ENCODE measurements at regions of chr12 and their contacts with region 1.

Region 1: DNA sequence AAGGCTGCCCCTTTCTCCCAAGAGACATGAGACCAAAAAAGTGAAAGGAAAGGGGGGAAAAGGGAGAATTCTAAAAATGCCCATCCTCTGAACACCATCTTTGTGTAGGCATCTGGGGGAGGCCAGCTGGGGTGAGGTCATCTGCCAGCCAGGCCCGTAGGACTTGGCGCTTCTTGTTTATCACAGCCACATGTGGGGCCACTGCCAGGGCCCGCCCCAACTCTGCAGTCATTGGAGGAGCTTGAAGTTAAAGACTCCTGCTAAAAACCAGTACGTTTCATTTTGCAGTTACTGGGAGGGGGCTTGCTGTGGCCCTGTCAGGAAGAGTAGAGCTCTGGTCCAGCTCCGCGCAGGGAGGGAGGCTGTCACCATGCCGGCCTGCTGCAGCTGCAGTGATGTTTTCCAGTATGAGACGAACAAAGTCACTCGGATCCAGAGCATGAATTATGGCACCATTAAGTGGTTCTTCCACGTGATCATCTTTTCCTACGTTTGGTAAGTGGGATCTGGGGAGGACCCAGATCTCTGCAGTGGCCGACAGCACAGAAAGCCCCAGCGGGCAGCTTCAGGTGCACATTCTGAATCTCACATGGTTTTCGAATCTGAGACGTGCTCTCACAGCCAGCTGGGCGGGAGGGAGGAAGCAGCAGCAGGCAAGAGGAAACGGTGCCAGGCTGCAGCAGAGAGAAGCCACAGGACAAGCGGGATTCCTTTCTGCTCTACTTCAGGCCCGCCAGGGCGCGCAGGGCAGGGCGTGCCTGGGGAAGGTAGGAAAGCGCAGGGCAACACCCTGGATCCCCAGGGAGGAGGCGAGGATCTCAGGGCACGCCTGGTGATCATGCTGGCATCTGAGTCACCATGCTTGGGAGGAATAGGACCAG is at the start of gene P2RX7:
- DNase-seq: peak; percentile 95
- ATAC-seq: peak; percentile 99
- H3K4me3 ChIP-seq: peak within 1 kb of the TSS; percentile 65
- H3K27ac ChIP-seq: peak within 1 kb of the TSS; percentile 42
- H3K4me1 ChIP-seq: peaks cover 19% of the 10 kb centered on the region
- H3K27me3 ChIP-seq: no peaks in the 10 kb centered on the region
- CTCF ChIP-seq: peak; percentile 30; the same call in 1 of the 2 replicates
- total RNA-seq, gene P2RX7: 1.6 and 6.0 TPM in 2 replicates

Region 2: GRCh38 chr12:121214855-121215745 is 82.3 kb after region 1 on chr12:
- CTCF ChIA-PET with region 1: no interaction called
- POLR2A ChIA-PET with region 1: no interaction called
- intact Hi-C with region 1: loop called (anchors 2 kb)
- DNase-seq: peak; percentile 96
- ATAC-seq: peak; percentile 74
- H3K4me3 ChIP-seq: peak overlapping the region; percentile 14; the same call in 1 of the 2 replicates
- H3K27ac ChIP-seq: peak overlapping the region; percentile 41
- H3K4me1 ChIP-seq: peaks cover 36% of the 10 kb centered on the region
- H3K27me3 ChIP-seq: no peaks in the 10 kb centered on the region
- CTCF ChIP-seq: no peak

Region 3: GRCh38 chr12:121230538-121230907 is 97.7 kb after region 1 on chr12:
- CTCF ChIA-PET with region 1: no interaction called
- POLR2A ChIA-PET with region 1: interaction called, 4 read pairs
- intact Hi-C with region 1: loop called (anchors 2 kb)
- DNase-seq: no peak
- ATAC-seq: no peak; the same call in 1 of the 2 replicates
- H3K4me3 ChIP-seq: no peak overlapping the region
- H3K27ac ChIP-seq: no peak overlapping the region
- H3K4me1 ChIP-seq: peaks cover 22% of the 10 kb centered on the region
- H3K27me3 ChIP-seq: no peaks in the 10 kb centered on the region
- CTCF ChIP-seq: no peak

Measured in PC-3 (cell line).